ENCODE measurements at regions of chr1 and their contacts with region 1.

Region 1: GRCh38 chr1:221708987-221709386 is 32.9 kb downstream of the DUSP10 start:
- DNase-seq: peak; percentile 62
- ATAC-seq: peak; percentile 7
- H3K4me3 Mint-ChIP-seq: no peak overlapping the region
- H3K27ac Mint-ChIP-seq: peak overlapping the region; percentile 83
- H3K4me1 Mint-ChIP-seq: peaks cover 67% of the 10 kb centered on the region
- H3K27me3 Mint-ChIP-seq: no peaks in the 10 kb centered on the region

Region 2: DNA sequence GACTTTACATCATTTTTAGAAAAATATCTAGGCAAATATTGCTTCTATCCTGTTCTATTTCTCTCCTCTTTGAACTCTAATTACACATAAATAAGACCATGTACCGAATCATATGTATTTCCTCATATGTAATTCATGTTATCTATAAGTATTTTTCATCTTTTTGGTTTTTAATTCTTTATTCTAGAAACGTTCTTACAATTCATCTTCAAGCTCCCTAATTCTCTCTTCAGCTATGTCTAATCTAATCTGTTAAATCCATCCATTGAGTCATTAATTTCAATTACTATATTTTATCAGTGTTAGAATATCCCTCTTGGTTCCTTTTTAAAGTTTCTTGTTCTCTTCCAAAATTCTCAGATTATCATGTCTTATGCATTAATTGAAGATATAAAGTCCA is 28.9 kb before region 1 on chr1:
- CTCF ChIA-PET with region 1: no interaction called
- DNase-seq: no peak
- ATAC-seq: no peak
- H3K4me3 Mint-ChIP-seq: no peak overlapping the region
- H3K27ac Mint-ChIP-seq: no peak overlapping the region
- H3K4me1 Mint-ChIP-seq: peaks cover 7% of the 10 kb centered on the region
- H3K27me3 Mint-ChIP-seq: no peaks in the 10 kb centered on the region

Region 3: DNA sequence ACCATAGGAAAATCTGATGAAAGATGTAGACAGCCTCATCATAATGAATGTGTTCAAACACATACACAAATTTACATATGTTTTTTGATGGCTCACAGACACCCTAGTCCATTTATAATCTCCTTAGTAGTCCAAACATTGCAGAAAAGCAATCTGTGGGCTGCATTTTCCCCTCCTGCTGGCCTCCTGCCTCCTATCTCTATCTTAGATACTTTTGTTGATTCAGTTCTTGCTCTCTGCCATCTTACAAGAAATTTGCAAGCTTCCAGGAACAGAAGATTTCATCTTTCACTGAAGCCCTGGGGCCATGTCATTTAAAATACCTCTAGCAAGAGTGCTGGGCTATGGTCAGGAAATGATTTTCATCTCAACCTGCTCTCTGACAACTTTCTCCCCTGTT is 17.7 kb before region 1 on chr1:
- CTCF ChIA-PET with region 1: interaction called, 11 read pairs
- DNase-seq: no peak
- ATAC-seq: no peak
- H3K4me3 Mint-ChIP-seq: no peak overlapping the region
- H3K27ac Mint-ChIP-seq: peak overlapping the region; percentile 61
- H3K4me1 Mint-ChIP-seq: peaks cover 39% of the 10 kb centered on the region
- H3K27me3 Mint-ChIP-seq: no peaks in the 10 kb centered on the region

Region 4: DNA sequence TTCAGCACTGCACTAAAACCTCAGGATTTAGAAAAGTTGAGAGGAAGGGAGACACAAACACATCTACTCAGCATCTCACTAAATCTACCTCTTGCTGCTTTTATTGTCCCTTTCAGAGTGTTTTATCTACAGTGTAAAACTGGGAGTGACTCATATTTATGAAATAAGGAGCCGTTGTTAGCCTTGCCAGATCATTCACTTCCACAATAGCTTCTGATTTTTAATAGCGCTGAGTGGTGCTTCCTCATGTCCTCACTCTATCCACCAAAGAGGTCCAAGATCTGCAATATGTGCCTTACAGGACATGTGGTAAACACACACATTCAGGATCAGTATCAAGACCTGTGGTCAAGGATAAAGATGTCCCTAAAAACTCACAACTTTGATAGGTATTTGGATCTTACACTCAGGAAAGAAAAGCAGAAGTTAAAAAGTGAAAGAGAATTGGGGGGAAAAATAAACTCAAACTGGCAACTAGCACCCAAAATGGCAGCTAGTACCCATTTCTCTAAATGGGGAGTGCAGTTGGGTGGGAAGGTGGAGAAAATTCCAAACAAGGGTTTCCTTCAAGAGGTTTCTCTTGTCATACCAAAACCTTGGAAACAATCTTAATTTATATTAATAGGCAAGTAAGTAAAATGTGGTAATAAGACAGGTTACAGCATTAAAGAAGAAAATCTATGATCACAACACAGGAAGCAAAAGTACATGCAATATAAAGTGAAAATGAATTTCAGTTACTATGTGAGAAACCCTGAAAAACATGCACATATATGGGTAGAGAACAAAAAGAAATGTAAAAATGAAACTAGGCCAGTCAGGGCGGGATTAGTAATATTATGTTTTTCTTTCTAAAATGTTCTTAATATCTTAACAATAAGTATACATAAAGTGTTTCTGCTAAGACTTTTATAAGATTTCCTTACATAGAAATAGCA is 17.0 kb after region 1 on chr1:
- CTCF ChIA-PET with region 1: interaction called, 10 read pairs
- DNase-seq: no peak
- ATAC-seq: peak; percentile 80
- H3K4me3 Mint-ChIP-seq: peak overlapping the region; percentile 60
- H3K27ac Mint-ChIP-seq: peak overlapping the region; percentile 92
- H3K4me1 Mint-ChIP-seq: peaks cover 75% of the 10 kb centered on the region
- H3K27me3 Mint-ChIP-seq: no peaks in the 10 kb centered on the region